ENCODE measurements at regions of chr20 and their contacts with region 1.

Region 1: GRCh38 chr20:29123861-29124260 is 2133.6 kb upstream of the DEFB115 start:
- DNase-seq: no peak
- H3K4me3 ChIP-seq: no peak overlapping the region
- H3K27ac ChIP-seq: no peak overlapping the region
- H3K4me1 ChIP-seq: no peaks in the 10 kb centered on the region
- H3K27me3 ChIP-seq: no peaks in the 10 kb centered on the region
- CTCF ChIP-seq: no peak
- POLR2A ChIP-seq: no peak

Region 2: GRCh38 chr20:29878281-29878741 is 754.5 kb after region 1 on chr20:
- intact Hi-C with region 1: loop called (anchors 5 kb)
- DNase-seq: peak; percentile 77
- H3K4me3 ChIP-seq: peak overlapping the region in 1 of 8 donors; percentile 27
- H3K27ac ChIP-seq: no peak overlapping the region
- H3K4me1 ChIP-seq: no peaks in the 10 kb centered on the region
- H3K27me3 ChIP-seq: peaks cover 0 to 12% (median 0%) of the 10 kb centered on the region in 7 donors
- CTCF ChIP-seq: no peak
- POLR2A ChIP-seq: no peak

Measured in spleen (tissue), 13 donors.